T-cell (primary cell): ENCODE measurements at regions of chr7 and their contacts with region 1.

Region 1: GRCh38 chr7:65006094-65006992 is at the start of gene ERV3-1:
- DNase-seq: peak; percentile 81 to 97 (median 94)
- ATAC-seq: peak; percentile 99 to 100 (median 100)
- H3K4me3 ChIP-seq: peak within 1 kb of the TSS; percentile 61 to 94
- H3K4me3 Mint-ChIP-seq: peak within 1 kb of the TSS; percentile 95 to 96 (median 95)
- H3K27ac ChIP-seq: peak within 1 kb of the TSS; percentile 84
- H3K27ac Mint-ChIP-seq: peak within 1 kb of the TSS; percentile 94 to 96
- H3K4me1 ChIP-seq: peaks cover 5 to 25% of the 10 kb centered on the region in 2 experiments
- H3K4me1 Mint-ChIP-seq: peaks cover 38 to 50% (median 45%) of the 10 kb centered on the region in 3 donors
- H3K27me3 ChIP-seq: no peaks in the 10 kb centered on the region
- H3K27me3 Mint-ChIP-seq: no peaks in the 10 kb centered on the region
- total RNA-seq, gene ERV3-1: 9.5 to 15.9 (median 12.0) TPM

Region 2: DNA sequence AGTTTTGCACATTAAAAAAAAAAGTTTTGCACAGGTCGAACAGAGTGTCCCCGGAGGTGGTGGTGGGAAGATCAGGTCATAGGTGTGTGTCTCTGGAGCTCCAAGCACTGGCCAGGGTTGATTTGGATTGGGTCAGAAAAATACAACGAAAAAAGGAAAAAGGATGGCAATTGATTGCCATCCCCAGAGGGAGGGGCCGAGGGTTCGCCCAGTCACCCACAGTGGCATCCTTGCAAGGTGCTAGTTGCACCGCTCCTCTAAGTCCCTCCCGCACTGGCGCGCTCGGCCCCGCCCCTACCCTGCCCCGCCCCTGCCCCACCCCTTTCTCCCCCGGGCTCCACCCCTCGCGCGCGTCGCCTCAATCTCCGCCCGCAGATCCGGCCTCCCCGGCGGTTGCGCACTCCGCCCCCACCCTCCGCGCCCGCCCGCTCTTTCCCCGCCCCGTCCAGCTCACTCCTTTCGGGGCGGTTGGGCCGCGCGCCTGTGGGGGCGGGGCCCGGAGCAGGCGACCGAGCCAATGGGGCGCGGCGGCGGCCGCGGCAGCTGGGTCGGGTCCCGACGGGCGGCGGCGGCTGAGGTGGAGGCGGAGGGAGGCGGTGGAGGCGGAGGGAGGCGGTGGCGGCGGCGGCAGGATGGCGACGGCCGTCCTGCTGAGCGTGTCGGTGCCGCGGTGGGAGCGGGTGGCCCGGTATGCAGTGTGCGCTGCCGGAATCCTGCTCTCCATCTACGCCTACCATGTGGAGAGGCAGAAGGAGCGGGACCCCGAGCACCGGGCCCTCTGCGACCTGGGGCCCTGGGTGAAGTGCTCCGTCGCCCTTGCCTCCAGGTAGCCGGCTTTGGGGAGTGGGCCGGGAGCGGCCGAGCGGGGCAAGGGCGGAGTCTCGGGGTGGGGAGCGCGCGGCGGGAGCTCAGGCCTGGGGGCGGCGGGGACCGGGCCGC is 31.7 kb after region 1 on chr7:
- CTCF ChIA-PET with region 1: interaction called, 4 to 13 read pairs
- POLR2A ChIA-PET with region 1: interaction called, 17 to 24 read pairs
- DNase-seq: peak; percentile 84 to 96 (median 92)
- ATAC-seq: peak; percentile 88 to 94 (median 92)
- H3K4me3 ChIP-seq: peak overlapping the region; percentile 23 to 71
- H3K4me3 Mint-ChIP-seq: peak overlapping the region; percentile 76 to 81 (median 80)
- H3K27ac ChIP-seq: peak overlapping the region; percentile 58
- H3K27ac Mint-ChIP-seq: peak overlapping the region; percentile 67 to 82
- H3K4me1 ChIP-seq: peaks cover 6 to 9% of the 10 kb centered on the region in 2 experiments
- H3K4me1 Mint-ChIP-seq: peaks cover 11 to 18% (median 17%) of the 10 kb centered on the region in 3 donors
- H3K27me3 ChIP-seq: no peaks in the 10 kb centered on the region
- H3K27me3 Mint-ChIP-seq: no peaks in the 10 kb centered on the region